ENCODE measurements at regions of chr19 and their contacts with region 1.

Region 1: DNA sequence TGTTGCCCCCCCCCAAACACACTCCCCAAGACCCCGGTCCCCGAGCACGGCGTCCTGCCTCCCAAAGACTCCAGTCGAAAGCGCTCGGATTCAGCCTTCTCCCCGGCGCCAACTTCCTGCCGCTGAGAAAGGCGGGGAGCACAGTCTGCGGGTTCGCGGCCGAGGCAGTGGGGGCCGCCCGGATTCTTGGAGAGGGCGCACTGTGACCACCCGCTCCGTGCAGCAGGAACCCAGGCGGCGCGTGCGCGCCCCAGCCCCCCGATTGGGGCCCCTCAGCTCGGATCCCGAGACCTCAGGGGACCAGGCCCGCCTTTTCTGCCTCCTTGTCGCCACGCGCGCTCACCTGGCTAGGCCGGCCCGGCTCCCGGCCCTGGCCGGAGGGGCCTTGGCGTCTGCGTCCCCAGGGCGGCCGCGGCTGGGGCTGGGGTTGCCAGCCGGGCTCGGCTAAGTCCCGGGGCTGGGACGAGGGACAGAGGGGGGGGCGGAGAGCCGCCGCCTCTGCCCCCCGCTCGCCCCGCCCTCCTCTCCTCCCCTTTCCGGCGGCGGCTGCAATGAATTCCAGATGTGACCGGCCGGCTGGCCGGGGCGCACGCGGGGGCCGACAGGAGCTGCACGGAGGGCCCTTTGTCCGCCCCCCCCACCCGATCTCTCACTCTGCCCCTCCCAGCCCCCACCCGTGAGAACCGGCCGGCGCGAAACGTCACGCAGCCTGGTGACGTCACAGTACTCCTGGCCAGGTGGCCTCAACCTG is at the start of gene S1PR2:
- DNase-seq: no peak
- H3K4me3 ChIP-seq: peak within 1 kb of the TSS; percentile 95
- H3K27me3 ChIP-seq: no peaks in the 10 kb centered on the region
- CTCF ChIP-seq: no peak
- polyA plus RNA-seq, gene S1PR2: 10.4 and 12.5 TPM in 2 replicates

Region 2: GRCh38 chr19:10155839-10156238 is 75.2 kb before region 1 on chr19:
- CTCF ChIA-PET with region 1: no interaction called
- POLR2A ChIA-PET with region 1: no interaction called
- DNase-seq: no peak
- H3K4me3 ChIP-seq: no peak overlapping the region
- H3K27me3 ChIP-seq: no peaks in the 10 kb centered on the region
- CTCF ChIP-seq: no peak

Region 3: GRCh38 chr19:10173257-10173926 is 57.6 kb before region 1 on chr19:
- CTCF ChIA-PET with region 1: no interaction called
- POLR2A ChIA-PET with region 1: interaction called, 14 read pairs
- DNase-seq: no peak
- H3K4me3 ChIP-seq: no peak overlapping the region
- H3K27me3 ChIP-seq: no peaks in the 10 kb centered on the region
- CTCF ChIP-seq: no peak